ENCODE measurements at regions of chr16 and their contacts with region 1.

Region 1: GRCh38 chr16:54422569-54422978 is 136.0 kb upstream of the IRX3 start:
- DNase-seq: peak; percentile 45 to 74
- H3K4me3 ChIP-seq: no peak overlapping the region
- H3K27ac ChIP-seq: peak overlapping the region; percentile 56
- H3K4me1 ChIP-seq: peaks cover 62% of the 10 kb centered on the region
- H3K27me3 ChIP-seq: no peaks in the 10 kb centered on the region
- CTCF ChIP-seq: no peak

Region 2: DNA sequence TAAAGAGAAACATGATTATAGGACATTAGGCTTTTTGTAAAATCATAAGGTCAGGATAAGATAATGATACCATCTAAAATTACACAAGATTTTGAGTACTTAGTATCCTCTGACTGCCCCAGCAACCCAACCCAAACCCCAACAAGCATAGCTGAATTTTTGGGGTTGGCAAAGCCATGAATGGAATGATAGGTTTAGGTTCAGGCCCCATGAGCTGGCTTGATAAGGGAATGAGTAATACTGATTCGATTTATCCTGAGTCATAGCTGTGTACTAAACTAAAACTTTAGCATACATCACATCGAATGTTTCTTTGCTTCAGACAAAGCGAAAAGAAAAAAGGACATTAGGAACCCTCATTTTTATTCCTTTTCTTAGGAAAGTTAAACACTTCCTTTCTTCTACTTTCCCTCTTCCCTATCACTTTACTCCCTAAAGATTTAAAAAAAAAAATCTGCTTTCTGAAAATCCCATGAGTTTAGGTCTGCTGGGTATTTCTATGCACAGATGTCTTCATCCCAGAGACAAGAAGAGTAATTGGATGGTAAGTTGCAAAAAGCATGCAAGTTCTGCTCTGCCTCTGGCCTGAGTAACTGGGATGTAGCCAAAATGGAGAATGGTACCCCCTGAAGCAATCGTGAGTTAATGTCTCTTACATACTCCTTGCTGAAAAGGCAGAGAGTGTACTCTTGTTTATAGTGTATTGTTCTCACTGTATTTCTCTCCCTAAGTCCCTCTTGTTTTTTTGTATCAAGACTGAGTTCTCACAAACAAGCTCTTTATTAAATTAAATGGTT is 395.2 kb before region 1 on chr16:
- CTCF ChIA-PET with region 1: no interaction called
- POLR2A ChIA-PET with region 1: no interaction called
- intact Hi-C with region 1: loop called (anchors 5 kb)
- DNase-seq: peak; percentile 66 to 96
- H3K4me3 ChIP-seq: peak overlapping the region; percentile 29; the same call in 1 of the 2 replicates
- H3K27ac ChIP-seq: peak overlapping the region; percentile 90
- H3K4me1 ChIP-seq: peaks cover 69% of the 10 kb centered on the region
- H3K27me3 ChIP-seq: no peaks in the 10 kb centered on the region
- CTCF ChIP-seq: no peak

Region 3: GRCh38 chr16:54193665-54194333 is 228.8 kb before region 1 on chr16:
- CTCF ChIA-PET with region 1: no interaction called
- POLR2A ChIA-PET with region 1: no interaction called
- intact Hi-C with region 1: loop called (anchors 10 kb)
- DNase-seq: peak; percentile 59 to 84
- H3K4me3 ChIP-seq: peak overlapping the region; percentile 52
- H3K27ac ChIP-seq: peak overlapping the region; percentile 17; the same call in 1 of the 2 replicates
- H3K4me1 ChIP-seq: no peaks in the 10 kb centered on the region; the same call in 1 of the 2 replicates
- H3K27me3 ChIP-seq: no peaks in the 10 kb centered on the region
- CTCF ChIP-seq: peak; percentile 90

Region 4: DNA sequence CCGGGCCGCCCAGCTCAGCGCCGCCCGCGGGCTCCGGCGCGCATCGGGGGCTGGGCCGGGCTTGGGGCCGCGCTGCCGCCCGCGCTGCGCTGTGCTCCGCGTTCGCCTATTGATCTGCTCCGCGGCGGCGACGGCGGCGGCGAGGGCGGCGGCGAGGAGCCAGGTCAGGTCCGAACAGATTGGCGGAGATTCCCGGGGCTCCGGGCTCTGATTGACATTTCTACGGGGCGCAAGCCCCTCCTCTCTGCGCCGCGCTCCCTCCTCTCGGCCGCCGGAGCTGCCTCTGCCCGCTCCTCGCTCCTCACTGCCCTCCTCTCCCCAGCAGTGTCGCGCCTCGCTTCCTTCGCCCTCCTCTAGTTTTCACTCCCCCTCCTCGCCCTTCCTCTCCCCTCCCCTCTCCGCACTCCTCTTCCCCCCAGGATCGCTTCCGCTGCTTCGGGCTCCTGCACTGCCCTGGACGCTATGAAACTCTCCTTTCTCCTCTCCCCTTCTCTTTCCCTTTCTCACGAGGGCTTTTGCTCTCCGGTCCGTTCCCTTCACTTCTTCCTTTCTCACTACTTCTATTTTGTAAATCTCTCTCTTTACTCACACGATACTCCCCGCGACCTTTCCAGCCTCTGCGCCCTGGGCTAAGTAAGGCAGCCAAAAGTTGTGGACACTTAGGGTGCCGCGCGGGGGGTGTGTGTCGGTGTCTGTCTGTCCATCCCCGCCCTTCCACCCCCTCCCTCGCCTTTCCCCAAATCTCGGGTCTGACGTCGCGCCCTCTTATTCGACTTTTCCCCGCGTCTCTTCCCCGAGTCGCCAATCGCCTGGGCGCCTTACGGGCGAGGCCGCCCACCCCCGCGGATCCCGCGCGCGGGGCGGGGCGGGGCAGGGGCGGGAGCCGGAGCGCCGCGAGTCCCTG is 136.2 kb before region 1 on chr16 and contains the start of gene IRX3:
- CTCF ChIA-PET with region 1: no interaction called
- POLR2A ChIA-PET with region 1: interaction called, 4 read pairs
- intact Hi-C with region 1: loop called (anchors 2 kb)
- DNase-seq: peak; percentile 88 to 90
- H3K4me3 ChIP-seq: peak within 1 kb of the TSS; percentile 98
- H3K27ac ChIP-seq: peak within 1 kb of the TSS; percentile 86
- H3K4me1 ChIP-seq: peaks cover 6% of the 10 kb centered on the region
- H3K27me3 ChIP-seq: no peaks in the 10 kb centered on the region
- CTCF ChIP-seq: no peak
- total RNA-seq, gene IRX3: 13.1 and 16.0 TPM in 2 replicates

Region 5: GRCh38 chr16:54303613-54304012 is 119.0 kb before region 1 on chr16:
- CTCF ChIA-PET with region 1: interaction called, 10 read pairs
- POLR2A ChIA-PET with region 1: no interaction called
- intact Hi-C with region 1: no loop called
- DNase-seq: no peak
- H3K4me3 ChIP-seq: no peak overlapping the region
- H3K27ac ChIP-seq: no peak overlapping the region
- H3K4me1 ChIP-seq: no peaks in the 10 kb centered on the region
- H3K27me3 ChIP-seq: no peaks in the 10 kb centered on the region
- CTCF ChIP-seq: no peak

Region 6: GRCh38 chr16:54341892-54342776 is 80.4 kb before region 1 on chr16:
- CTCF ChIA-PET with region 1: no interaction called
- POLR2A ChIA-PET with region 1: no interaction called
- intact Hi-C with region 1: loop called (anchors 2 kb)
- DNase-seq: peak; percentile 17 to 81
- H3K4me3 ChIP-seq: no peak overlapping the region
- H3K27ac ChIP-seq: peak overlapping the region; percentile 61
- H3K4me1 ChIP-seq: peaks cover 25% of the 10 kb centered on the region
- H3K27me3 ChIP-seq: no peaks in the 10 kb centered on the region
- CTCF ChIP-seq: no peak

Region 7: DNA sequence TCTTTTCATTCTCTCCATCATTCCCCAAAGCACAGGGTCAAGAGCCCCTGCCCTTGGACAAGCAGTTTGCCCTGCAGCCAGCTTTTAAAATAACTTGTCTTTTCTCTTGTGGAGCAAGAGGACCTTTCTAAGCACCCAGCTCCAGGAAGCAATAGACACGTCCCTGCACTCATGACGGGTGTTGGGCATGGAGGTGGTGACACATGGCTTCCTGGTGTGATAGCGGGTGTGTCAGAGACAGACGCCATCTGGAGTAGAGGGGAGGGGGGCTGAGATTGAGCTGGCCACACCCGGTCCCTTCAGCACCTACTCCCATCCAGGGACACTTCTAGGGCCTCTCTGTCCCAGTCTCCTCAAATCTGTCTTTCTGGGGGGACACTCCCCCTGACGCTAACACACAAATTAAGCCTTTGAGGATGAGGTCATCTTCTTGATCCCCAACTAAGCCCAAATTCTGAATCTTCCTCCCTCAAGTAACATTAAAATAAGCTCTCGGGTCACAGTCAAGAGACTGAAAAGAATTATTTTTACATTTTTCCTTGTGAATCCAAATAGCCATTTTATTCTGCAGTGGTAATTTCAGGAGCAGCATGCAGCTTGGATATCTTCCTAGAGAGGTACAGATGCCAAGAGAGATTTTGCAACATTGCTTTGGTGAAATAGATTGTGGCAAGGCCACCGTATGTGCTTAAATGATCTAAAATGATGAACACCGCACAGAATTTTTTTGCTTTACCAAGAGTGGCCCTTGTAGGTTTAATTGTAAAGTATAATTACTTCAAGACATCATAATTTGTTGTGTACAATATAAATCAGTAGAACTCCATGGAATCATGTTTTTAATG is 80.7 kb after region 1 on chr16:
- CTCF ChIA-PET with region 1: no interaction called
- POLR2A ChIA-PET with region 1: no interaction called
- intact Hi-C with region 1: no loop called
- DNase-seq: no peak
- H3K4me3 ChIP-seq: no peak overlapping the region
- H3K27ac ChIP-seq: no peak overlapping the region
- H3K4me1 ChIP-seq: no peaks in the 10 kb centered on the region
- H3K27me3 ChIP-seq: no peaks in the 10 kb centered on the region
- CTCF ChIP-seq: no peak

Measured in PC-9 (cell line).